ENCODE measurements at regions of chr12 and their contacts with region 1.

Region 1: DNA sequence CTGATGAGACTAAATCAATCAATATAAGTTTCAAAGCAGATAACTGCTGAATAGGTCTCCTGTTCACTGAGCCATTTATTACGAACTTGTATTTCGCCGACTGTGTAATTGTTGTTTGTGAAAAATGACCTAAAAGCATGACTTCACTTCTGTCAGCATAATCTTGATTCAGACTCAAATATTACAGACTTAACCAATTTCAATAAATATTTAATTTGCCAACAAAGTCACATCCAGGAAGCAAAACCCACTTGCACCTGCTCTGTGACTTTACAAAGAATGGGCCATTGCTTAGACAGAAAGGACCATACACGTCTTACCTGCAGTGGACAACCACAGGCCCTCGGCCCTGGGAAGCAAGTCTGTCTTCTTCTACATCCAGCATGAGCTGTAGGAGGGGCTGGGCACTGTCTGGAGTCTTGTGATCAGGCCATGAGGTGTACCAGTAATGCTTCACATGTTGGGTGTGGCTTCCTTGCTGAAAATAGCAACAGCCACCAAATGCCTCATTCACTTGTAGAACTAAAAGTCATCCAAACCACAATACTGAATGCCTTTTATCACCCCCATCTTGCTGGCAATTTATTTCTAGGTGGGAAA is 23.5 kb upstream of the PTPRB start:
- DNase-seq: peak in 4 of 5 donors; percentile 48 to 62 (median 52)
- ATAC-seq: peak; percentile 77 to 91 (median 84)
- H3K4me3 ChIP-seq: no peak overlapping the region
- H3K27ac ChIP-seq: peak overlapping the region in 6 of 12 donors; percentile 6 to 58 (median 36)
- H3K4me1 ChIP-seq: peaks cover 0 to 26% (median 6%) of the 10 kb centered on the region in 12 donors
- H3K27me3 ChIP-seq: no peaks in the 10 kb centered on the region
- CTCF ChIP-seq: no peak
- POLR2A ChIP-seq: no peak

Region 2: DNA sequence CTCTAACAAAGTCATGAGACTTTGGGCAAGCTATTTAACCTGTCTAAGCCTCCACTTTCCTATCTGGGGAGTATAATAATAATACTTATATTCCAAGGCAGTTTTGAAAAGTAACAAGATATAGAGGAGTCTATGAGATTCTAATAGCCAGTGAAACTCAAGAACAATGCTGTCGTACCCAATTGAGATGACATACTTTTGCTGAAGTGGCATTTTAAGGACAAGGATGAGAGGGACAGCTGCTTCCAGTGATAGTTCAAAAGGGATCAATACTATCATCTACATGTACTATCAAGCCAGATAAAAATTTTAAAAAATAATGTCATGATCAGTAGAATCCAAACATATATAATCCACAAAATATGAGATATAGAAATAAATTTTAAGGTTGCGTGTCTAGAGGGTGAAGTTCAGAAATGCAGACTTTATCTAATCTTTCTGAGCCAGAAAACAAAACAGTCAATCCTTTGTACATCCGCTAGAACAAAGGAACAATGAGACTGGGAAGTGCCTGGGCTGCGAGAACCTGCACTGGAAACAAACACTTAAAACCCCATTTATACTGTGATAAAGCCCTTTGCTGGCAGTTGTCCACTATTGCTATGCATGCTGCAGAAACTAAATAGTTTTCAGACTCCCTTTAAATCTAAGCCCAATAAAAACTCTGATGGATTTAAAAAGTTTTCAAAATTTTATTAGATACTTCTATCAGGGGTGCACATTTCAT is 62.1 kb before region 1 on chr12:
- intact Hi-C with region 1: loop called in 2 of 10 experiments (anchors 5 to 10 kb)
- DNase-seq: peak in 2 of 5 donors; percentile 45 to 66
- ATAC-seq: peak; percentile 58 to 91 (median 68)
- H3K4me3 ChIP-seq: peak overlapping the region in 6 of 12 donors; percentile 4 to 35 (median 20)
- H3K27ac ChIP-seq: peak overlapping the region in 9 of 12 donors; percentile 11 to 61 (median 28)
- H3K4me1 ChIP-seq: peaks cover 0 to 23% (median 0%) of the 10 kb centered on the region in 12 donors
- H3K27me3 ChIP-seq: no peaks in the 10 kb centered on the region
- CTCF ChIP-seq: no peak
- POLR2A ChIP-seq: no peak

Region 3: GRCh38 chr12:70609711-70610491 is 50.8 kb before region 1 on chr12:
- intact Hi-C with region 1: loop called in 1 of 10 experiments (anchors 10 kb)
- DNase-seq: peak; percentile 70 to 78 (median 77)
- ATAC-seq: peak; percentile 73 to 91 (median 89)
- H3K4me3 ChIP-seq: peak overlapping the region; percentile 24 to 73 (median 60)
- H3K27ac ChIP-seq: peak overlapping the region; percentile 68 to 90 (median 78)
- H3K4me1 ChIP-seq: peaks cover 0 to 40% (median 13%) of the 10 kb centered on the region in 12 donors
- H3K27me3 ChIP-seq: peaks cover 0 to 21% (median 0%) of the 10 kb centered on the region in 9 donors
- CTCF ChIP-seq: no peak
- POLR2A ChIP-seq: peak in 1 of 2 donors; percentile 59

Region 4: DNA sequence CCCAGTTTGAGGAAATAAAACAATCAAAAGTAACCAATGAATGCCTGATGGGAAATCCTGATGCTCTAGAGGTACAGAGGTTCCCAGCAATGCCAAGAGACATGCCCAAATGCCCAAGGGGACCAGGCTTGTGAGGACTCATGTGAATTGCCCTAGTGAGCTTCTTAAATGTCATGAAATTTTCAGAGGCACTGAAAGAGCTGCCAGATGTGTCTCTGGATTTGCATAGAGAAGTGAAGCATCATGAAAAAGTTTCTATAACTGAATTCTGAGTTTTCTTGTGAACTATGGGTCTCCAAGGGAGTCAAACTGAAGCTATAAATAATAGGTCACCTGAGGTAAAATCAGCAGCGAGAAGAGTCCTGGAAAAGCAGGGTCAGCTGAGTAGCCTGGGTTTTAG is 249.9 kb after region 1 on chr12:
- intact Hi-C with region 1: no loop called
- DNase-seq: no peak
- ATAC-seq: no peak
- H3K4me3 ChIP-seq: no peak overlapping the region
- H3K27ac ChIP-seq: no peak overlapping the region
- H3K4me1 ChIP-seq: no peaks in the 10 kb centered on the region
- H3K27me3 ChIP-seq: peaks cover 0 to 13% (median 0%) of the 10 kb centered on the region in 9 donors
- CTCF ChIP-seq: no peak
- POLR2A ChIP-seq: no peak